ENCODE measurements at regions of chr1 and their contacts with region 1.

Region 1: GRCh38 chr1:94481473-94481933 is 60.1 kb downstream of the F3 start:
- DNase-seq: peak; percentile 36 to 48 (median 44)
- H3K4me3 ChIP-seq: no peak overlapping the region
- H3K4me3 Mint-ChIP-seq: no peak overlapping the region
- H3K27ac ChIP-seq: no peak overlapping the region
- H3K27ac Mint-ChIP-seq: no peak overlapping the region
- H3K4me1 ChIP-seq: no peaks in the 10 kb centered on the region
- H3K4me1 Mint-ChIP-seq: peaks cover 0 to 3% (median 0%) of the 10 kb centered on the region in 4 donors
- H3K27me3 ChIP-seq: no peaks in the 10 kb centered on the region
- H3K27me3 Mint-ChIP-seq: no peaks in the 10 kb centered on the region

Region 2: DNA sequence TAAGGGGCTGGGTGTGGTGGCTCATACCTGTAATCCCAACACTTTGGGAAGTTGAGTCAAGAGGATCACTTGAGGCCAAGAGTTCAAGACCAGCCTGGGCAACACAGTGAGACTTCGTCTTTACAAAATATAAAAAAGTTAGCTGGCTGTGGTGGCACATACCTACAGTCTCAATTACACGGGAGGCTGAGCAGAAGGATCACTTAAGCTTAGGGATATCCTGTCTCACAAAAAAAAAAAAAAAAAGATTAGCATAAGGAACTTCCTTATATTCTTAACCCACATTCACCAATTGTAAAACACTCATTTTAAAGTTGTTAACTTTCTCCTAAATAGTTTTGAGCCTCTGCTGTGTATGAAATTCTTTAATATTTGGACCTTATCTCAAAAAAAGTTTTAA is 10.2 kb before region 1 on chr1:
- CTCF ChIA-PET with region 1: interaction called, 26 read pairs
- POLR2A ChIA-PET with region 1: no interaction called
- intact Hi-C with region 1: no loop called
- DNase-seq: no peak
- H3K4me3 ChIP-seq: no peak overlapping the region
- H3K4me3 Mint-ChIP-seq: no peak overlapping the region
- H3K27ac ChIP-seq: no peak overlapping the region
- H3K27ac Mint-ChIP-seq: no peak overlapping the region
- H3K4me1 ChIP-seq: no peaks in the 10 kb centered on the region
- H3K4me1 Mint-ChIP-seq: peaks cover 0 to 1% (median 0%) of the 10 kb centered on the region in 4 donors
- H3K27me3 ChIP-seq: no peaks in the 10 kb centered on the region
- H3K27me3 Mint-ChIP-seq: no peaks in the 10 kb centered on the region

Region 3: DNA sequence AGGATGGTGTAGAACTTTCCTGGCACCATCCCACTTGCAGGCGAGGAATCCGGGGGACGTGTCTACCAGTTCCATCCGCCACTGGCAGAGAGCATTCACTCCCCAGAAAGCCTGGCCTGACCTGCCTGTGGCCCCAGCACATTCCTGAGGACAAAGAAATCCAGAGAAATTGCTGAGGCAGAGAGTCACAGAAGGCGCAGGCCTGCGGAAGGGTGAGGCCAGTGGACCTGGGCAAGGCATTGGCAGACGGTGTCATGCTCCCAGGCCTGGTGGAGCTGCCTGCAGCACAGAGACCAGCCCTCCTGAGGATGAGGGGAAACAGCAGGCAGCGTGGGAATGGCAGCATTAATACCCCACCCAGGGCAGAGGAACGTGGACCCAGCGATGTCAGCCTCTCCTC is 141.3 kb after region 1 on chr1:
- CTCF ChIA-PET with region 1: no interaction called
- POLR2A ChIA-PET with region 1: no interaction called
- intact Hi-C with region 1: no loop called
- DNase-seq: no peak
- H3K4me3 ChIP-seq: no peak overlapping the region
- H3K4me3 Mint-ChIP-seq: no peak overlapping the region
- H3K27ac ChIP-seq: no peak overlapping the region
- H3K27ac Mint-ChIP-seq: no peak overlapping the region
- H3K4me1 ChIP-seq: no peaks in the 10 kb centered on the region
- H3K4me1 Mint-ChIP-seq: no peaks in the 10 kb centered on the region
- H3K27me3 ChIP-seq: no peaks in the 10 kb centered on the region
- H3K27me3 Mint-ChIP-seq: peaks cover 2 to 5% of the 10 kb centered on the region in 2 donors

Region 4: DNA sequence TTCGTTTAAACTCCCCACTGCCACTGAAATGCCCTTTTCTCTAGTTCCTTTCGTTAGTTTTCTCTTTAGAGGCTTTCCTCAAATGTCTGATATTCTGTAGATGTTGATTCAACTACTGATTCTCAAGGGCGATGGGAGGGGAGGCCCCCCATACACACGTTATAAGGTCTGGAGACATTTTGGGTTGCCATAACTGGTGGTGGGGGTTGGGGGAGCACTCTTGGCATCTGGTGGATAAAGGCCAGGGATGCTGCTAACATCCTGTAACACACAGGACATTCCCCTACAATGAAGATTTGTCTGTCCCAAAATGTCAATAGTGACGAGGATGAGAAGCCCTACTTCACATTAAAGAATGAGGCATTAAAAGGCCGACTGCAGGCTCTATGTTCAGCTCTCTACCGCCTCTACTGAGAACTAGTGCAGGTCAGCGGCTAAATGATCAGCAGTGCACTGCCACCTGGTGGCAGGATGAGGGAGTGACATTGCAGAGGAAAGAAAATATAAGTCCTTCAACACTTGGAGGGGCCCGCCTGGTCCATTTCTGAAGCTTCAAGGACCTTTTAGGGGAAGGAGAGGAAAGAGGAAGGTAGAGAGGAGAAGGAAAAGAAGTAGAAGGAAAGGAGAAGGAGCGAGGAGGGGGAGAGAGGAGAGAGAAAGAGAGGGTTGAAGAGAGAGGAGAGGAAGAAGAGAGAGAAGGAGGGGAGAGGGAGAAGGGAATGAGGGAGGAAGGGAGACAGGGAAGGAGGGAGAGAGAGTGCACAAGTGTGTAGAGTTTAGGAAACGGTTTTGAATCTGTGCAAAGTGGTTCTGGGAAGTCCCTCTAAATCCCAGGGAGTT is 561.9 kb after region 1 on chr1:
- CTCF ChIA-PET with region 1: interaction called, 4 read pairs
- POLR2A ChIA-PET with region 1: no interaction called
- intact Hi-C with region 1: loop called (anchors 1 kb)
- DNase-seq: peak; percentile 68 to 73 (median 72)
- H3K4me3 ChIP-seq: no peak overlapping the region
- H3K4me3 Mint-ChIP-seq: no peak overlapping the region
- H3K27ac ChIP-seq: no peak overlapping the region
- H3K27ac Mint-ChIP-seq: no peak overlapping the region
- H3K4me1 ChIP-seq: no peaks in the 10 kb centered on the region
- H3K4me1 Mint-ChIP-seq: no peaks in the 10 kb centered on the region
- H3K27me3 ChIP-seq: no peaks in the 10 kb centered on the region
- H3K27me3 Mint-ChIP-seq: no peaks in the 10 kb centered on the region